A549 (cell line): ENCODE measurements at regions of chr19 and their contacts with region 1.

Region 1: GRCh38 chr19:15177269-15178116 is 23.3 kb downstream of the NOTCH3 start:
- DNase-seq: peak; percentile 35 to 78
- ATAC-seq: peak; percentile 90 to 92
- H3K4me3 ChIP-seq: peak overlapping the region; percentile 40
- H3K27ac ChIP-seq: peak overlapping the region; percentile 67 to 88; a peak in 5 of 6 replicates
- H3K4me1 ChIP-seq: 0 out of 3 replicates have a peak, but pooled peaks cover 2% of the 10 kb centered on the region
- CTCF ChIP-seq: peak; percentile 73
- EP300 ChIP-seq: no peak
- POLR2A ChIP-seq: no peak
- RAD21 ChIP-seq: peak; percentile 68 to 85

Region 2: DNA sequence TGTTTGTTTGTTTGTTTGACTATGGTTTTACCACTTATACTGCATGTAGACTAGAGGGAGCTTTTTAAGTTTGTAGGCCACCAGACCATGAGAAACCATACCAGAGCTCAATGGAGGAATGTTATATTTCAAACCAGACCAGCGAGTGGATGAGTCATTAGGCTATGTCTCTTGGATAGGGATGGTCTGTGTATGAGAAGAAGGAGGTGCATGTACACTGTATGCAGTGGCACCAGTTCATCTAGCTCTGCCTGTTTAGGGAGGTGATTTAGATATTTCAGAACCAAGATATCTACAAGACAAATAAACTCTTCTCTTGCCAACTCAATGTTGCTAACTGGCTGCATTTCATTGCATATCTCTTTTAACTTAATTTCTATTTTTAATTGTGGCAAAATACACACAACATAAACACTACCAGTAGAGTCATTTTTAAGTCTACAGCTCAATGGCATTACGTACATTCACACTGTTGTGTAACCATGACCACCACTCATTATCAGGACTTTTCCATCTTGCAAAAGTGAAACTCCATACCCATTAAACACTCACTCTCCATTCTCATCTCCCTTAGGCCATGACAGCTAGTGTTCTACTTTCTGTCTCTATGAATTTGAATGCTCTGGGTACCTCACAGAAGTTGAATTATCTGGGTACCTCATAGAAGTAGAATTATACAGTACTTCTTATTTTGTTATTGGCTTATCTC is 41.1 kb before region 1 on chr19:
- CTCF ChIA-PET with region 1: no interaction called
- POLR2A ChIA-PET with region 1: no interaction called
- DNase-seq: no peak
- ATAC-seq: no peak
- H3K4me3 ChIP-seq: no peak overlapping the region
- H3K27ac ChIP-seq: no peak overlapping the region
- H3K4me1 ChIP-seq: no peaks in the 10 kb centered on the region
- CTCF ChIP-seq: no peak
- EP300 ChIP-seq: no peak
- POLR2A ChIP-seq: no peak
- RAD21 ChIP-seq: no peak

Region 3: DNA sequence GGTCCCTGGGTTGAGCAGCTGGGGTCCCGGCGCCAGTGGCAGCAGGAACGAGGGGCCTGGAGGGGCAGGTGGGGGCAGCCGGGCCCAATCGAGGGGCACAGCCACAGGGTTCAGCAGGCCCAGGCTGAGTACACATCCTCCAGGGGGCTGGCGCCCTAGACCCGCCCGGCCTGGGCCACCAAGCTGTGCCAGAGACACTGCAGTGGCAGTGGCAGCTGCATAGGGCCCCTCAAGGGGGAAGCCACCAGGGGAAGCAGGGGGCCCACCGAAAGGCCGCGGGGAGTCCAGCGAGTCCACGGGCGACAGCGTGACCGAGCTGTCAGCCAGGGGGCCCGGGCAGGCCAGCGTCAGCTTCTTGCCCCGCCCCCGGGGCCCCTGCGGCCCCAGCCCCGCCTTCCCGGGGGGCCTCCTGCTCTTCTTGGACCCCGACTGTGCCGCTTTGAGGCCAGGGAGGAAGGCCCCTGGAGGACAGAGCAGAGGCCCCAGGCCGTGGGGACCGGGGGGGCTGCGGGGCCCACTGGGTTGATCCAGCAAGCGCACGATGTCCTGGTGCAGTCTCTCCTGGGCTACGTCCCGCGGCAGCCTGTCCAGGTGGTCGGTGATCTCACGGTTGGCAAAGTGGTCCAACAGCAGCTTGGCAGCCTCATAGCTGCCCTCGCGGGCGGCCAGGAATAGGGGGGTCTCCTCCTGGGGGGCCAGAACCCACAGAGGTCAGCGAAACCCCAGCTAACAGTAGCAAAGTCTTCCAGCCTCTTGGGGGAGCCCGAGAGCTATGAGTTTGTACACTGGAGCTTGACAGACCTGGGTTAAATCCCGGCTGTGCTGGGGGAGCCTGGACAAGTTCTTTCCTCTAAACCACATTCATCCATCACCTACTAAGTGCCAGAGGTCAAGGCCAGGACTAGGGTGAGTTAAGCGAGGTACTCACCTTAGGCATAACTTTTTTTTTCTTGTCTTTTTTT is 16.2 kb before region 1 on chr19:
- CTCF ChIA-PET with region 1: interaction called, 14 read pairs
- POLR2A ChIA-PET with region 1: no interaction called
- DNase-seq: peak; percentile 55 to 64
- ATAC-seq: peak; percentile 59 to 91; a peak in 4 of 6 replicates
- H3K4me3 ChIP-seq: no peak overlapping the region
- H3K27ac ChIP-seq: no peak overlapping the region
- H3K4me1 ChIP-seq: no peaks in the 10 kb centered on the region
- CTCF ChIP-seq: peak; percentile 54
- EP300 ChIP-seq: no peak
- POLR2A ChIP-seq: no peak
- RAD21 ChIP-seq: peak; percentile 54 to 66; a peak in 4 of 5 replicates

Region 4: DNA sequence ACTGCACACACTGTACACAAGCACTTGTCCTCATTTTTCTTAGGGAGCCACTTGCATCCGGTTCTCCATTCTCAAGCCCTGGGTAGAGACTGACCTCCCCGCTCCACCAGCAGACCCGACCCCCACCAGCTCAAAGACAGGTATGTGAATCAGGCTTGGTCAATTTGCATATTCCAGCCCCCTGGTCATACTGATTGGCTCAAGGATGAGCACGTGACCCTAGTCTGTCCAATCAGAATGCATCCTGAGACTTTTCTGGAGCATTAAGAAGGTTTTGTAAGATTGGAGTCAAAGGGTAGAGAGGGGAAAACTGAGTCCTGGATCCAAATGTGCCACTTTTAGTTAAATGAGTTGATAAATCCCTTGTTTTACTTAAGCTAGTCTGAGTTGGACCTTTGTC is 10.8 kb before region 1 on chr19:
- CTCF ChIA-PET with region 1: interaction called, 14 read pairs
- POLR2A ChIA-PET with region 1: no interaction called
- DNase-seq: no peak
- ATAC-seq: no peak
- H3K4me3 ChIP-seq: no peak overlapping the region
- H3K27ac ChIP-seq: no peak overlapping the region
- H3K4me1 ChIP-seq: no peaks in the 10 kb centered on the region
- CTCF ChIP-seq: no peak
- EP300 ChIP-seq: no peak
- POLR2A ChIP-seq: no peak
- RAD21 ChIP-seq: no peak

Region 5: GRCh38 chr19:15188851-15189250 is 11.4 kb after region 1 on chr19:
- CTCF ChIA-PET with region 1: interaction called, 13 read pairs
- POLR2A ChIA-PET with region 1: no interaction called
- DNase-seq: no peak
- ATAC-seq: no peak
- H3K4me3 ChIP-seq: no peak overlapping the region
- H3K27ac ChIP-seq: no peak overlapping the region
- H3K4me1 ChIP-seq: no peaks in the 10 kb centered on the region
- CTCF ChIP-seq: no peak
- EP300 ChIP-seq: no peak
- POLR2A ChIP-seq: no peak
- RAD21 ChIP-seq: no peak

Region 6: GRCh38 chr19:15216342-15216741 is 38.8 kb after region 1 on chr19:
- CTCF ChIA-PET with region 1: interaction called, 10 read pairs
- POLR2A ChIA-PET with region 1: no interaction called
- DNase-seq: no peak
- ATAC-seq: no peak
- H3K4me3 ChIP-seq: no peak overlapping the region
- H3K27ac ChIP-seq: no peak overlapping the region
- H3K4me1 ChIP-seq: peaks cover 8% of the 10 kb centered on the region; the same call in 2 of the 3 replicates
- CTCF ChIP-seq: no peak
- EP300 ChIP-seq: no peak
- POLR2A ChIP-seq: no peak
- RAD21 ChIP-seq: no peak

Region 7: DNA sequence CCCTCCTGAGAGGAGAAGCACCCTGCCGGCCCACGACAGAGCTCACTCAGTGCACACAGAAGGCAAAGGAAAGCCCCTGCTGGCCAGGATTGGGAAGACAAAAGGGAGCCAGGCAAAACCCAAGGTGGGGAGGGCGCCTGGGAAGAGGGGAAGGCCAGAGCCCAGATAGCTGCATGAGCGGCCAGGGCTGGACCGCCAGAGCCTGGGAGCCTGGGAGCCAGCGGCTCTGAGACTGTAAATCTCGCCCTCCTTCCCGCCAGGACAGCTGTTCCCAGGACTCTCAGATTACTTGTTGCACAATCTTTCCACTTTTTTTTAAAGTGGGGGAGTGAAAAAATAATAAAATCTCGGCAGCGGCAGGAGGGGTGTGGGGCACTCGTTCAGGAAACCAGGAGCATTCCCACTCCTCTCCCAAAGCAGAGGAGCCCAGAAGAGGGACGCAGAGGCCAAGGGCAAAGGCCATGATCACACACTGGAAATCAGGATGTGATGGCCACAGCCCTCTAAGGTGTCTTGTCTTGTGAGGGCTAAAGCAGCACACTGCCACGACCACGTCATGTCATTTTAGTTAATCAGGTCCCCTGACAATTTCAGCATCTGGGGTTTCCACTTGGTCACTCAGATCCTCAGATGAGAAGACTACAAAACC is 74.4 kb after region 1 on chr19:
- CTCF ChIA-PET with region 1: interaction called, 12 read pairs
- POLR2A ChIA-PET with region 1: no interaction called
- DNase-seq: peak; percentile 55 to 58
- ATAC-seq: peak; percentile 32 to 78; a peak in 5 of 6 replicates
- H3K4me3 ChIP-seq: no peak overlapping the region
- H3K27ac ChIP-seq: peak overlapping the region; percentile 40 to 84; a peak in 5 of 6 replicates
- H3K4me1 ChIP-seq: peaks cover 55% of the 10 kb centered on the region
- CTCF ChIP-seq: no peak
- EP300 ChIP-seq: no peak
- POLR2A ChIP-seq: no peak
- RAD21 ChIP-seq: no peak